Sigmoid colon (tissue), 7 donors: ENCODE measurements at regions of chr10 and their contacts with region 1.

Region 1: GRCh38 chr10:72331601-72332422 is 22.9 kb downstream of the DNAJB12 start:
- DNase-seq: peak; percentile 91
- H3K4me3 ChIP-seq: peak overlapping the region in 1 of 4 donors; percentile 14
- H3K27ac ChIP-seq: peak overlapping the region; percentile 75 to 87 (median 80)
- H3K4me1 ChIP-seq: peaks cover 0 to 69% (median 60%) of the 10 kb centered on the region in 4 donors
- H3K27me3 ChIP-seq: no peaks in the 10 kb centered on the region
- CTCF ChIP-seq: peak; percentile 10 to 47 (median 34)
- EP300 ChIP-seq: no peak
- POLR2A ChIP-seq: no peak

Region 2: DNA sequence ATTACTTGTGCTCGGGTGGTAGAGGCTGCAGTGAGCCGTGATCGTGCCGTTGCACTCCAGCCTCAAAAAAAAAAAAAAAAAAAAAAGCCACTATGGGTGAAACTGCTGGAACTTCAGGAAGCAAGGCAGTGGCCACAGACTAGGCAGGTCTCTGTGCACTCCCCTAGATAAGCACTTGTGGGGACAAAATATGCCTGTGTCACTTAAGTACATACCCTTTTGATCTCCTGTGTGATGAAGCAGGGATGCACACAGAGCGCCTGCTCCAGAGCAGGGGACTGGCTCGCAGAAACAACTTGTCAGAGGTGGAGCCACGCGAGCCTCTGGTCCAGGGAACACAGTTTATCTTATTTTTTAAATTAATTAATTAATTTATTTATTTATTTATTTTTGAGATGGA is 437.9 kb before region 1 on chr10:
- intact Hi-C with region 1: loop called (anchors 10 kb)
- DNase-seq: no peak
- H3K4me3 ChIP-seq: no peak overlapping the region
- H3K27ac ChIP-seq: no peak overlapping the region
- H3K4me1 ChIP-seq: peaks cover 0 to 14% (median 10%) of the 10 kb centered on the region in 4 donors
- H3K27me3 ChIP-seq: no peaks in the 10 kb centered on the region
- CTCF ChIP-seq: no peak
- EP300 ChIP-seq: no peak
- POLR2A ChIP-seq: no peak

Region 3: DNA sequence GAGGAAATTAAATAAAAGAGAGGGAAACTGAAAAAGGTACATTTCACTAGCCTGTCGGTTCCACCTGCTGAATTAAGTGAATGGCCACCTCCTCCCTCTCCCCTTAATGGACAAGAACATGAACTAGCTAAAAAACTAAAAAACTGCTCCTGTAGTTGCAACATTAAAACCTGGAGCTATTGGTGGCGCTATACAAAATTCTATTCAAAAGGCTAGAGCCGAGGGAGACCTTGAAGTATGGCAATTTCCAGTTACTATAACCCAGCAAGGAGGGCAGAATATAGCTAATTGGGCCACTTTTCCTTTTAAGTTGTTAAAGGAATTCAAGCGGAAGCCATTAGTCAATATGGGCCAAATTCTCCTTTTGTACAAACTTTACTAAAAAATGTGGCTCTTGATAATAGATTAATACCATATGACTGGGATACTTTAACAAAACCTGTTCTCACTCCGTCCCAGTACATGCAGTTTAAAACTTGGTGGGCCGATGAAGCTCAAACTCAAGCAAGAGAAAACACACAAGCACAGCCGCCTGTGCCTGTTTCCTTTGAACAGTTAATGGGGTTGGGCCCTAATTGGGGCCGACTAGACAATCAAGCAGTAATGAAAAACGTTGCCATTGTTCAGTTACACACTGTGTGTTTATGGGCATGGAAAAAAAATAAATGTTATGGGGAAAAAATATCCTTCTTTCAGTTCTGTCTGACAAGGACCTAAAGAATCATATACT is 374.1 kb before region 1 on chr10:
- intact Hi-C with region 1: loop called (anchors 5 kb)
- DNase-seq: no peak
- H3K4me3 ChIP-seq: no peak overlapping the region
- H3K27ac ChIP-seq: no peak overlapping the region
- H3K4me1 ChIP-seq: peaks cover 0 to 7% (median 4%) of the 10 kb centered on the region in 4 donors
- H3K27me3 ChIP-seq: no peaks in the 10 kb centered on the region
- CTCF ChIP-seq: no peak
- EP300 ChIP-seq: no peak
- POLR2A ChIP-seq: no peak

Region 4: GRCh38 chr10:72126184-72126871 is 205.5 kb before region 1 on chr10:
- intact Hi-C with region 1: loop called (anchors 5 kb)
- DNase-seq: no peak
- H3K4me3 ChIP-seq: no peak overlapping the region
- H3K27ac ChIP-seq: no peak overlapping the region
- H3K4me1 ChIP-seq: no peaks in the 10 kb centered on the region
- H3K27me3 ChIP-seq: no peaks in the 10 kb centered on the region
- CTCF ChIP-seq: peak in 1 of 4 experiments; percentile 8
- EP300 ChIP-seq: no peak
- POLR2A ChIP-seq: no peak

Region 5: DNA sequence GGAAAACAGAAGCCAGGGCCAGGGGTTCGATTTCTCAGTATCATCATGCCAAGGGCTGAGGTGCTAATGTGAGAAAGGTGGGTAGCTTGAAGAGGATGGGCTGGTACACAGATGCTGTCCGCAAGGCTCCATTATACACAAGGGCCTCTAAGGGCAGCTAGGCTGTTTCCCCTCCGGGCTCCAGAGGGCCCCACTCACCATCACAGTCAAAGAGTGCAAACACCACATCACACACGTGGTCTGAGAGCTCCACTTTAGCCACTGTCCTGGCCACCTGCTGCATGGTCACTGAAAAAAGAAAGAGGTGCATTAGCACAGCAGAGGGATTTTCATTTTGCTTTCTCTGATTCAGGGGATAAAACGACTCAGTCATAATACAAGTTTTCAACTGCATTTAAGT is 43.8 kb after region 1 on chr10:
- intact Hi-C with region 1: no loop called
- DNase-seq: no peak
- H3K4me3 ChIP-seq: no peak overlapping the region
- H3K27ac ChIP-seq: no peak overlapping the region
- H3K4me1 ChIP-seq: no peaks in the 10 kb centered on the region
- H3K27me3 ChIP-seq: no peaks in the 10 kb centered on the region
- CTCF ChIP-seq: no peak
- EP300 ChIP-seq: no peak
- POLR2A ChIP-seq: no peak